ENCODE measurements at regions of chr9 and their contacts with region 1.

Region 1: DNA sequence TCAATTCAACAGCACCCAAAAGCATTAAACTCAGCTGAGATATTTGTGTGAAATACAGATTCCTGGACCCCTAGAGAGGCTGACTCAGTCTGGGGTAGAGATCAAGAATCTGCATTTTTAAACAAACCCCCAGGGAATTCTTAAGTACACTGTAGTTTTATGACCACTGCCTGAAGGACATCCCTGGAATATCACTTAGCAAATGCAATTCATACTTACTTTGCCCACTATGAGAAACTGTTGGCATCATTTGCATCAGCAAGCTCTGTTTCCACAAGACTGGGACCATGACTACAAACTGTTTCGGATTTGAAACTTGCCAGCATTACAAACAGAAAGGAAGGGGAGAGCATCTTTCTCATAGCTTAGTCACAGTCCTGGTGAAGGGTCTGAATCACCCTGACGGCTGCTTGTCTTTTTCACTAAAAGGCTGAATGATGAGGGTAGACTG is 63.7 kb downstream of the MLLT3 start:
- DNase-seq: peak; percentile 57
- ATAC-seq: peak; percentile 87
- H3K4me3 Mint-ChIP-seq: peak overlapping the region; percentile 31
- H3K27ac Mint-ChIP-seq: peak overlapping the region; percentile 59
- H3K4me1 Mint-ChIP-seq: peaks cover 86% of the 10 kb centered on the region
- H3K27me3 Mint-ChIP-seq: no peaks in the 10 kb centered on the region
- CTCF ChIP-seq: no peak

Region 2: GRCh38 chr9:20361656-20362570 is 196.7 kb before region 1 on chr9:
- CTCF ChIA-PET with region 1: no interaction called
- POLR2A ChIA-PET with region 1: no interaction called
- intact Hi-C with region 1: loop called (anchors 10 kb)
- DNase-seq: no peak
- ATAC-seq: peak; percentile 74
- H3K4me3 Mint-ChIP-seq: peak overlapping the region; percentile 9
- H3K27ac Mint-ChIP-seq: peak overlapping the region; percentile 75
- H3K4me1 Mint-ChIP-seq: peaks cover 59% of the 10 kb centered on the region
- H3K27me3 Mint-ChIP-seq: no peaks in the 10 kb centered on the region
- CTCF ChIP-seq: no peak

Measured in activated CD8-positive, alpha-beta T cell treated with anti-CD3 and anti-CD28 coated beads for 36 hours (primary cell).